Calu3 (cell line): ENCODE measurements at regions of chr12 and their contacts with region 1.

Region 1: GRCh38 chr12:96985480-96986362 is 78.7 kb downstream of the NEDD1 start:
- DNase-seq: peak; percentile 69
- H3K4me3 Mint-ChIP-seq: peak overlapping the region; percentile 65
- H3K27ac Mint-ChIP-seq: no peak overlapping the region
- H3K4me1 Mint-ChIP-seq: no peaks in the 10 kb centered on the region
- H3K27me3 Mint-ChIP-seq: peaks cover 22% of the 10 kb centered on the region
- CTCF ChIP-seq: peak; percentile 91

Region 2: DNA sequence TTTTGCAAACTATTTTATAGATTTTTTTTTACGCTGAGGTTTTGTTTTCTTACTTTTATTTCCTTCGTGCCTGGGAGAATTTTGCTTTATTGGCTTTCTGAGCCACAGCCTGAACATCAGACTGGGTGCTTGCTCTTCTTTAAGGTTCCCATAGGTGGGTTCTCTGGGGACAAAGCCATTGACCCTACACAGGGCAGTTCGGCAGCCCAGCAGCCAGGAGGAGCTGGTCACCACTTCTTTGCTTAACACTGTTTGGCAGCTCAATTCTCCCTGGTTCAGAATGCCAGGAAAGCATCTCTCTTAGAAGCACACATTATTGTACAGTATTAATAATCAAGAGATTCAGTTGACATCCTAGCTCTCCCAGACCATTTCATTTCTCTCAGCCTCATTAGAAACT is 219.5 kb before region 1 on chr12:
- CTCF ChIA-PET with region 1: interaction called, 4 read pairs
- intact Hi-C with region 1: loop called (anchors 5 kb)
- DNase-seq: peak; percentile 9
- H3K4me3 Mint-ChIP-seq: no peak overlapping the region
- H3K27ac Mint-ChIP-seq: no peak overlapping the region
- H3K4me1 Mint-ChIP-seq: no peaks in the 10 kb centered on the region
- H3K27me3 Mint-ChIP-seq: peaks cover 10% of the 10 kb centered on the region
- CTCF ChIP-seq: no peak

Region 3: DNA sequence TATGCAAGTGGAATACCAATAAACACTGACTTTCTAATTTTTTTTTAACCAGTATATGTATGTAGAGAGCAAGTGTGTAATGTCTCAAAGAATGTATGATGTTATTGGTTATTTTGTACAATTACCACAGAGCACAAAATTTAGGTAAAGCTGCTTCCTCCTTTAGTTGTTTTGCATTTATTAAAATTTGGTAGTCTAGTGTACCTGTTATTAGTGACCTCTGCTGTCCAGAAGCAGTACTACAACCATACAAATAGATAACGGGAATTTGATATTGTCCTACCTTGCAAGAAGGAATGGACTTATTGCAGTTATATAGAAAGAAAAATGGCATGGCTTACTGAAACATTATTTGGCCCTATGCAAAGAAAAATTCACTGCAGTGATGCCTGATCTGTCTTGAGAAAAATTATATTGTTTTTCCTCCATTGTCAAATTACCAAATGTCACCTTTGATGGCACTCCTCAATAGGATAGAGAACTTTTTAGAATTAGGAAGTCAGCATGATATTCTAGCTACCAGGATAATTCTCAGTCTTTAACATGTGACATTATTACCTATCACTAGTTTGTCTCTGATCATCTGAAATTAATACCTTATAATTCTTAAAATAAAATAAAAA is 323.0 kb after region 1 on chr12:
- CTCF ChIA-PET with region 1: no interaction called
- intact Hi-C with region 1: loop called (anchors 2 kb)
- DNase-seq: peak; percentile 35
- H3K4me3 Mint-ChIP-seq: no peak overlapping the region
- H3K27ac Mint-ChIP-seq: no peak overlapping the region
- H3K4me1 Mint-ChIP-seq: peaks cover 8% of the 10 kb centered on the region
- H3K27me3 Mint-ChIP-seq: peaks cover 17% of the 10 kb centered on the region
- CTCF ChIP-seq: peak; percentile 64

Region 4: DNA sequence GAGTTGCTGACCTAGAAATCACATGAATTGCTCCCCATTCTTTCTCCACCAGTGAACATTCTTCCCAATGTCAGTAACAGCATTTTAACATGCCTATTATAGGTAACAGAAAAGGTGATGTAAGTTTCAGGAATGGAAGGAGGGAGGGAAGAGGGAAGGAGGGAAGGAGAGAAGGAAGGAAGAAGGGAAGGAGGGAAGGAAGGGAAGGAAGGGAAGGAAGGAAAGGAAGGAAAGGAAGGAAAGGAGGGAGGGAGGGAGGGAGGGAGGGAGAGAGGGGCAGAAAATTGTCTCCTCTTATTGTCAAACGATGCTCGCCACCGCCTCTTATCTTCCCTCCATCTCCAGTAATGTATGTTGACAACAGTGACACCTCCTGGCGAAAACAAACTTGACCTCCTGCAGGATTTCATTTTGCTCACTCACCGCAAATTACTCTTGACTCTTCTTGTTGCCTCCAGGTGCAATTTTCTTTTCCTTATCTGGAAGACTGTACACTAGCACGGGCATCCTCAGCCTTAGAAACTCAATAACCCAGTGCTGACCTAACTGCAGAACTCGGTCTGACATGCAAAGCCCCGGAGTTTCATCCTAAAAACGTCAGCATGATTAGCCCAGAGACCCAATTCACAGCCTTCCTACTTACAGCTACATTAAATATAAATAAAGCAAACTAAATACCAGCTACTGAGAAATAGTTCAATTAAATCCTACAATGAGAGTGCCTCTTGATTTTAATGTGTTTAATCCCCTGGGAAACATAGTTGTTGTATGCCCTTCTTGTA is 1017.2 kb after region 1 on chr12:
- CTCF ChIA-PET with region 1: no interaction called
- intact Hi-C with region 1: loop called (anchors 5 kb)
- DNase-seq: peak; percentile 72
- H3K4me3 Mint-ChIP-seq: no peak overlapping the region
- H3K27ac Mint-ChIP-seq: no peak overlapping the region
- H3K4me1 Mint-ChIP-seq: peaks cover 9% of the 10 kb centered on the region
- H3K27me3 Mint-ChIP-seq: no peaks in the 10 kb centered on the region
- CTCF ChIP-seq: peak; percentile 61

Region 5: DNA sequence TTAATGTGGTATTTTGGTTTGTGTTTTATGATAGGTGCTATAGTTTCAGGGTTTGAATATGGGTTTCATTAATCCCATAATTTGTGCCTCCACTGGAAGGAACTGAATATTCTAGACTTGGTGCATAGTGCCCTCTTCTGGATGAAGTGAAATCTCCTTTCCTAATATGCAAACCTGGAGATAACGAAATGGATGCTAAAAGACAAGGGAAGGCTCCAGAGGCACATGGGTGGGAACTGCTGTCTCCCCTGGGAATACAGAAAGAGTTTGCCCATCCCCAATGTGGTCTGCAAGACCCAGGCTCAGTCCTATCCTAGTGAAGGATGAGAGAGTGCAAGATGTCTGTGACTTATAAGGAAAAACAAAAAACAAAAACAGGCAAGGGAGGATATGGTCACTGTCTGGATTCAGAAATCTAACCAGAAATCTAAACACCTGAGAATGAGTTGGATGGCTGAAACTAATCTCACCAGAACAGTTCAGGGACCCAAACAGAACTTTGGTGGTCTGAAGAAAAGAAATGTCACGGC is 1387.4 kb after region 1 on chr12:
- CTCF ChIA-PET with region 1: no interaction called
- intact Hi-C with region 1: loop called (anchors 1 kb)
- DNase-seq: peak; percentile 47
- H3K4me3 Mint-ChIP-seq: no peak overlapping the region
- H3K27ac Mint-ChIP-seq: no peak overlapping the region
- H3K4me1 Mint-ChIP-seq: peaks cover 9% of the 10 kb centered on the region
- H3K27me3 Mint-ChIP-seq: peaks cover 52% of the 10 kb centered on the region
- CTCF ChIP-seq: peak; percentile 48